Endothelial cell of umbilical vein (primary cell): ENCODE measurements at regions of chr13 and their contacts with region 1.

Region 1: GRCh38 chr13:50685491-50685890 is 158.0 kb downstream of the DLEU7 start:
- DNase-seq: peak; percentile 97
- H3K4me3 ChIP-seq: peak overlapping the region in 1 of 3 experiments; percentile 35
- H3K27ac ChIP-seq: peak overlapping the region; percentile 87
- H3K4me1 ChIP-seq: peaks cover 39% of the 10 kb centered on the region
- H3K27me3 ChIP-seq: no peaks in the 10 kb centered on the region
- CTCF ChIP-seq: no peak
- POLR2A ChIP-seq: no peak

Region 2: DNA sequence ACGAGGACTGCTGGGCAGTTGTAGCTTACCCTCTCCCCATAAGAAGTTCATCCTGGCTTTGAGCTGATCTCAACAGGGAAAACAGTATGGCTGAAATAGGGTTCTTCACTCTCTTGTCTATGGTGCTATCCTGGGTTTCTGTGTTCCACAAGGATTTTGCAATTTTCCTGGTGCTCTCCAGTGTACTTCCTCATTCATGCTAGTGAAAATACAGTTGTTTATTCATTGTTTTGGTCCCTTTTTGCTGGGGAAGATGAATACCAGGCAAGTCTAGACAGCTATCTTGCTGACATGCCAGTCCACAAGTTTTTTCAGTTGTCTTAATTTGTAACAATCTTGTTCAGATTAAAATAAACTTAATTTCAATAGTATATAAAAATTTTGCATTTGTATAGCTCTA is 148.5 kb before region 1 on chr13:
- CTCF ChIA-PET with region 1: no interaction called
- POLR2A ChIA-PET with region 1: no interaction called
- dilution Hi-C with region 1: no loop called
- intact Hi-C with region 1: loop called (anchors 2 kb)
- DNase-seq: no peak
- H3K4me3 ChIP-seq: no peak overlapping the region
- H3K27ac ChIP-seq: no peak overlapping the region
- H3K4me1 ChIP-seq: peaks cover 7% of the 10 kb centered on the region
- H3K27me3 ChIP-seq: no peaks in the 10 kb centered on the region
- CTCF ChIP-seq: no peak
- POLR2A ChIP-seq: no peak

Region 3: GRCh38 chr13:50617134-50617721 is 68.3 kb before region 1 on chr13:
- CTCF ChIA-PET with region 1: interaction called, 3 read pairs
- POLR2A ChIA-PET with region 1: no interaction called
- dilution Hi-C with region 1: no loop called
- intact Hi-C with region 1: loop called (anchors 1 kb)
- DNase-seq: peak; percentile 92
- H3K4me3 ChIP-seq: no peak overlapping the region
- H3K27ac ChIP-seq: peak overlapping the region; percentile 51
- H3K4me1 ChIP-seq: peaks cover 21% of the 10 kb centered on the region
- H3K27me3 ChIP-seq: no peaks in the 10 kb centered on the region
- CTCF ChIP-seq: no peak
- POLR2A ChIP-seq: no peak

Region 4: DNA sequence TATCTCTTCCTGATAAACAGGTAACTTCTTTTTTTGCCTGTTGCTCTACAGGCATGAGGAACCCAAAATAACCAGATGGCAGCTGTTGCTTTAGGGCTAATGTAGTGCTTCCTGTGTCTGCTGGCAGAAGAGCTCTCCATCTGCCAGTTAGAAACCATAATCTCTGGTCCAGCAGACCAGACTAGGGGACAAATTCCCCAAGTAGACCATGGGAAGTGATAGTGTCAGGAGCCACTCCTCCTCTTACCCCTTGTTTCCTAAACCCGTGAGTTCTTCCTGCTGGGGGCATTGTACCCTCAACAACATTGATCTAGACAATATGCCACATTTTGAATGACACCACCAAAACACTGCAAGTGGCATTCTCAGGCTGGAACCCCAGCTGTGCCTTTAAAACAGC is 22.1 kb after region 1 on chr13:
- CTCF ChIA-PET with region 1: no interaction called
- POLR2A ChIA-PET with region 1: no interaction called
- dilution Hi-C with region 1: no loop called
- intact Hi-C with region 1: no loop called
- DNase-seq: no peak
- H3K4me3 ChIP-seq: no peak overlapping the region
- H3K27ac ChIP-seq: no peak overlapping the region
- H3K4me1 ChIP-seq: no peaks in the 10 kb centered on the region
- H3K27me3 ChIP-seq: no peaks in the 10 kb centered on the region
- CTCF ChIP-seq: no peak
- POLR2A ChIP-seq: no peak